Heart right ventricle (tissue), 16 donors: ENCODE measurements at regions of chr14 and their contacts with region 1.

Region 1: DNA sequence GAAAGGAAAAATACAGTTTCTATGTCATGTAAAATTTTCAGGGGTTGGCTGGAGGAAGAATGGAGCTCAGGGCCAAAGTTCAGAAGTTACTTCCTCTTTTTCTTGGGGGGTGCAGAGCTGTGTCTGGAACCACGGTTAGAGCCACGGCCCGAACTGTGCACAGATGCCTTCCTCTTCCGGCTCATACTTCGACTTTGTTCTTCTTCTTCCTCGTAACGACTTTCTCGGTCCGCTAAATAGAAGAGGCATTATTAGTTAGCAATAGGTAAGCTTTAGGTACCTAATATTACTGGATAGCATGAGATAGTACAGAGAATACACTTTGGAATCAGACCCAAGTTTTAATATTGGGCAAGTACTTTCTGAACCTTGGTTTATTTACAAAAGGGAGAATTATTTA is 31.2 kb downstream of the SUPT16H start:
- DNase-seq: peak in 1 of 2 donors; percentile 4
- ATAC-seq: peak in 2 of 8 donors; percentile 31 to 42
- H3K4me3 ChIP-seq: no peak overlapping the region
- H3K27ac ChIP-seq: peak overlapping the region in 1 of 10 donors; percentile 70
- H3K4me1 ChIP-seq: peaks cover 0 to 4% (median 0%) of the 10 kb centered on the region in 9 donors
- H3K27me3 ChIP-seq: no peaks in the 10 kb centered on the region
- CTCF ChIP-seq: no peak

Region 2: GRCh38 chr14:21408147-21408546 is 55.6 kb after region 1 on chr14:
- intact Hi-C with region 1: loop called in 2 of 10 experiments (anchors 5 kb)
- DNase-seq: no peak
- ATAC-seq: no peak
- H3K4me3 ChIP-seq: no peak overlapping the region
- H3K27ac ChIP-seq: no peak overlapping the region
- H3K4me1 ChIP-seq: no peaks in the 10 kb centered on the region
- H3K27me3 ChIP-seq: no peaks in the 10 kb centered on the region
- CTCF ChIP-seq: no peak

Region 3: DNA sequence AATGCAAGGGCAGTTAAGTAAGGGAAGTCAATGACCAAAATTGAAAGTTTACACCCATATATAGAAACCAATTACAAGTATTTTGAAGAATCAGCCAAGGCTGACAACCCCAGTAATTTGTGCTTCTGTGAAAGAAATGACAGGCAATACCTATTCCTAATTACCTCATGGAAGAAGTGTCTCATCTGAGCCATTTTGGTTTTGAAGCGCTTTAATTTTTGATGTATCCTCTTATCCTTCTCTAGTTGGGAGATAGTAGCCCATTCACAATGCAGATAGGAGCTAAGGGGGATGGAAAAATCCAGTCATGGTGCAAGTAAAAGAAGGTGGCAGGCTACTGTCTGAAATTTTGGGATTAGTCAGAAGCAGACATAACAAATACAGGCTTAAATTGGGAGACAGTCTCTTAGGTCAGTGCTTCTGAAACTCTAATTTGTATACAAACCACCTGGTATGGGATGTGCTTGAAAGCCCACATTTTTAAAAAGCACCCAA is 61.6 kb after region 1 on chr14:
- intact Hi-C with region 1: loop called in 2 of 10 experiments (anchors 5 kb)
- DNase-seq: no peak
- ATAC-seq: no peak
- H3K4me3 ChIP-seq: no peak overlapping the region
- H3K27ac ChIP-seq: no peak overlapping the region
- H3K4me1 ChIP-seq: no peaks in the 10 kb centered on the region
- H3K27me3 ChIP-seq: no peaks in the 10 kb centered on the region
- CTCF ChIP-seq: no peak

Region 4: GRCh38 chr14:21894003-21894897 is 541.7 kb after region 1 on chr14:
- intact Hi-C with region 1: no loop called
- DNase-seq: no peak
- ATAC-seq: no peak
- H3K4me3 ChIP-seq: no peak overlapping the region
- H3K27ac ChIP-seq: no peak overlapping the region
- H3K4me1 ChIP-seq: no peaks in the 10 kb centered on the region
- H3K27me3 ChIP-seq: peaks cover 0 to 9% (median 0%) of the 10 kb centered on the region in 7 donors
- CTCF ChIP-seq: peak in 2 of 9 donors; percentile 7 to 31